CD8-positive, alpha-beta T cell (primary cell): ENCODE measurements at regions of chr2 and their contacts with region 1.

Region 1: DNA sequence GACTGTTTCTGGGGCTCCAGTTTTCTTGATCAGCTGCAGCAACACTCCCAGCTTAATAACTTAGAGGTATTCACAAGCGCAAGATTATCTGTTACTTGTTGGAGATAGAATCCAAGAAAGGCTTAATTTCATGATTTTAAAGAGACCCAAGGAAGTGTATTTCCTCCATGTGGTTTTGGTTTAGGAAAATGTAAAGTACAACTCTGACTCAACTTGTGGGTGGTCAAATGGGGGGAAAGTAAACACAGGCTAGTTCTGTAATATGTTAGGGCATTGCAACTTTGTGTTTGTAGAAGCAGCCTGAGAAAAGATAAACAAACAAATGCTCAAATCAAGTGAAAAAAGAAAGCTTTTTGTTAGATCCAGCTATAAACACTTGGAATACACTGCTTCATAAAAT is 90.1 kb upstream of the COL3A1 start:
- DNase-seq: no peak
- ATAC-seq: no peak
- H3K4me3 ChIP-seq: no peak overlapping the region
- H3K4me3 Mint-ChIP-seq: no peak overlapping the region
- H3K27ac ChIP-seq: no peak overlapping the region
- H3K27ac Mint-ChIP-seq: no peak overlapping the region
- H3K4me1 ChIP-seq: no peaks in the 10 kb centered on the region
- H3K4me1 Mint-ChIP-seq: no peaks in the 10 kb centered on the region
- H3K27me3 ChIP-seq: no peaks in the 10 kb centered on the region
- H3K27me3 Mint-ChIP-seq: no peaks in the 10 kb centered on the region
- CTCF ChIP-seq: no peak

Region 2: DNA sequence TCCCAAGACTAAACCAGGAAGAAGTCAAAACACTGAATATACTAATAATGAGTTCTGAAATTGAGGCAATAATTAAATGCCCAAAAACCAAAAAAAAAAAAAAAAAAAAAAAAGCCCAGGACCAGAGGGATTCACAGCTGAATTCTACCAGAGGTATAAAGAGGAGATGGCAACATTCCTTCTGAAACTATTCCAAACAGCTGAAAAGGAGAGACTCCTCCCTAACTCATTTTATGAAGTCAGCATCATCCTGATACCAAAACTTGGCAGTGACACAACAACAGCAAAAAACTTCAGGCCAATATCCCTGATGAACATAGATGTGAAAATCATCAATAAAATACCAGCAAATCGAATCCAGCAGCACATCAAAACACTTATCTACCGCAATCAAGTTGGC is 18.4 kb before region 1 on chr2:
- CTCF ChIA-PET with region 1: no interaction called
- POLR2A ChIA-PET with region 1: no interaction called
- intact Hi-C with region 1: loop called in 1 of 2 experiments (anchors 2 kb)
- DNase-seq: no peak
- ATAC-seq: no peak
- H3K4me3 ChIP-seq: no peak overlapping the region
- H3K4me3 Mint-ChIP-seq: no peak overlapping the region
- H3K27ac ChIP-seq: no peak overlapping the region
- H3K27ac Mint-ChIP-seq: no peak overlapping the region
- H3K4me1 ChIP-seq: no peaks in the 10 kb centered on the region
- H3K4me1 Mint-ChIP-seq: no peaks in the 10 kb centered on the region
- H3K27me3 ChIP-seq: no peaks in the 10 kb centered on the region
- H3K27me3 Mint-ChIP-seq: no peaks in the 10 kb centered on the region
- CTCF ChIP-seq: no peak